ENCODE measurements at regions of chr1 and their contacts with region 1.

Region 1: DNA sequence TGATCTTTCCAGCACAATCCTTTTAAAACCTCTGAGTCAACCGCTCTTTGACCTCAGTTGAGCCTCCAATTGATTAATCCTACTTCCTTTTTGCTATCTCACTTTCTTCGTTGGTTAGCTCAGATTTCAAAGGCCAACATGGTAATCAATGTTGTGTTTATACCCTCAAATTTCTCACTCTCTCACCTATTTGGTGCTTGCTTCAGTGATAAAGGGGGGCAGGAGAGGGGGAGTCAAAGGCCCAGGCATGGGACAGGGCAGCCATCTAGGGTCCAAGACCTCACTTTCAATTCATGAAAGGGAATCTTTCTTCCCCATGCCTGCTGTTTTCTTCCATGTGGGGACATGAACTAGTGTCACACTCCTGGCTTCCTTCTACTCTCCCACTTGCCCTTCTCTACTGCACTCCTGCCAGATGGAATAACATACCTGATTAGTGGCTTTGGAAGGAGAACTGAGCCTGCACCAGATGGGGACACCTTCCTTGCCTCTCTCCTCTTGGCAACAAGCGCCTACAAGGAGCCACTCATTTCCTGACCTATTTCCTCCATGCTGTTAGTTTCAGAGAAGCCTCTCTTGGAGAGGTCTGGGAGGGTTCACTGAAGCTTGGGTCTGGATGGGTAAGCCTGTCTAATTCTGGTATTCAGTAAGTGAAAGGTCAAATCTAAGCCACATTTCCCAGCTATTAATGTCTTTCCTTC is 73.3 kb upstream of the ARHGAP29 start:
- DNase-seq: no peak
- ATAC-seq: no peak
- H3K4me3 ChIP-seq: no peak overlapping the region
- H3K27ac ChIP-seq: peak overlapping the region; percentile 68
- H3K4me1 ChIP-seq: peaks cover 3% of the 10 kb centered on the region; the same call in 1 of the 2 replicates
- H3K27me3 ChIP-seq: no peaks in the 10 kb centered on the region
- CTCF ChIP-seq: no peak

Region 2: DNA sequence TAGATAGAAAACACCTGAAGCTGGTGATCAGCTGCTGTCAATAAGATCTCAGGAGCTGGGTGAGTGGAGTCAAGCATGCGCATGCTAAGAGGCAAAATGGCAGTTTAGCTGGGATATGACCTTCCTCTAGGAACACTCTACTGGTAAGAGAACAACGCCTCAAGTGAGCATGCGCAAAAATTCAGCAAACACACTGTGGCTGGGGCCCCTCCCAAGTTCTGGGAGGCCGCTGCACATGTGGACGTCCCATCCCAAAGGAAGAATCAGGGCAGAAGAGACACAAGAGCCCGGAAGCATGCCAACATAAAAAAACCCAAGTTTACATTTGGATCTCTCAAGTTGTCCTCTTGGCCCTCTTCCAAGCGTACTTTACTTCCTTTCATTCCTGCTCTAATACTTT is 357.1 kb after region 1 on chr1:
- CTCF ChIA-PET with region 1: no interaction called
- POLR2A ChIA-PET with region 1: interaction called, 10 read pairs
- in situ Hi-C with region 1: no loop called
- intact Hi-C with region 1: no loop called
- DNase-seq: no peak
- ATAC-seq: no peak
- H3K4me3 ChIP-seq: no peak overlapping the region
- H3K27ac ChIP-seq: no peak overlapping the region
- H3K4me1 ChIP-seq: no peaks in the 10 kb centered on the region
- H3K27me3 ChIP-seq: no peaks in the 10 kb centered on the region
- CTCF ChIP-seq: no peak

Region 3: DNA sequence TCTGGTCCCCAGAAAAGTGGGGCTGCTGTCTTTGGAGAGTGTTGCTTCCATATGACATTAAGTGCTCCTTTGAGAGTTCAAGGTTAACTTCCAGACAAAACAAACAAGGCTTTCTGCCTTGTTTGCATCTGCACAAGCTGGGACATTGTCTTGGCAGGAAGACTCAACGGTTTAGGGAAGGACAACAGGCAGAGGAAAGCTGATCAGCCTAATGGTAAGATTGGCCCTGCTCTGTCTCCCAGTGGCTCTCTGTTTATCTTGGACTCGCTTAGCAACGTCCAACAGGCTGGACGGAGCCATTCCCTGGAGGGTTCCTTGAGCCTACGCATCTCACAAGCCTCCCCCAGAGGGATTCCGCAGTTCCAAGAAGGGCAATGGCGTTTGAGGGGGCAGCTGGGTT is 447.2 kb after region 1 on chr1:
- CTCF ChIA-PET with region 1: no interaction called
- POLR2A ChIA-PET with region 1: interaction called, 10 read pairs
- in situ Hi-C with region 1: no loop called
- intact Hi-C with region 1: no loop called
- DNase-seq: no peak
- ATAC-seq: no peak
- H3K4me3 ChIP-seq: no peak overlapping the region
- H3K27ac ChIP-seq: no peak overlapping the region
- H3K4me1 ChIP-seq: no peaks in the 10 kb centered on the region
- H3K27me3 ChIP-seq: no peaks in the 10 kb centered on the region
- CTCF ChIP-seq: no peak

Measured in Panc1 (cell line).